ENCODE measurements at regions of chr2 and their contacts with region 1.

Region 1: DNA sequence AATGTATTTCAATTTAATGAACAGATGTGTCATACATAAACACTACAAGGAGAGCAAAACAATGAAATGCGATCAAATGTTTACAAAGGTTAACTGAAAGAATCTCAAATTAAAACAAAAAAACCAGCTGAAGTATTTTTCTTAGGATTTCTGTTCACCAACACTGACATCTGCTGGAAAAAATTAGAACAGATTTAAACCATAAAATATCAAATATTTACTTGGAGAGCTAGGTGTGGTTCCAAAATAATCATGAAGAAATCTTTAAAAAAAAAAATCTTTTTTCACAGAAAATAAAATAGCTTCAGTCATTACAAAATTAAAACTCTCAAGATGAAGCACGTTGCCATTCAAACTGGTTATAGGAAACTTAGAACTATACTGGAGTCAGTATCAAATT is 13.8 kb downstream of the MMADHC start:
- DNase-seq: no peak
- H3K4me3 Mint-ChIP-seq: no peak overlapping the region
- H3K27ac Mint-ChIP-seq: no peak overlapping the region
- H3K4me1 Mint-ChIP-seq: peaks cover 12% of the 10 kb centered on the region
- H3K27me3 Mint-ChIP-seq: no peaks in the 10 kb centered on the region

Region 2: GRCh38 chr2:149561309-149561926 is 12.3 kb before region 1 on chr2:
- CTCF ChIA-PET with region 1: interaction called, 12 read pairs
- POLR2A ChIA-PET with region 1: no interaction called
- DNase-seq: no peak
- H3K4me3 Mint-ChIP-seq: no peak overlapping the region
- H3K27ac Mint-ChIP-seq: no peak overlapping the region
- H3K4me1 Mint-ChIP-seq: peaks cover 4% of the 10 kb centered on the region
- H3K27me3 Mint-ChIP-seq: no peaks in the 10 kb centered on the region

Region 3: DNA sequence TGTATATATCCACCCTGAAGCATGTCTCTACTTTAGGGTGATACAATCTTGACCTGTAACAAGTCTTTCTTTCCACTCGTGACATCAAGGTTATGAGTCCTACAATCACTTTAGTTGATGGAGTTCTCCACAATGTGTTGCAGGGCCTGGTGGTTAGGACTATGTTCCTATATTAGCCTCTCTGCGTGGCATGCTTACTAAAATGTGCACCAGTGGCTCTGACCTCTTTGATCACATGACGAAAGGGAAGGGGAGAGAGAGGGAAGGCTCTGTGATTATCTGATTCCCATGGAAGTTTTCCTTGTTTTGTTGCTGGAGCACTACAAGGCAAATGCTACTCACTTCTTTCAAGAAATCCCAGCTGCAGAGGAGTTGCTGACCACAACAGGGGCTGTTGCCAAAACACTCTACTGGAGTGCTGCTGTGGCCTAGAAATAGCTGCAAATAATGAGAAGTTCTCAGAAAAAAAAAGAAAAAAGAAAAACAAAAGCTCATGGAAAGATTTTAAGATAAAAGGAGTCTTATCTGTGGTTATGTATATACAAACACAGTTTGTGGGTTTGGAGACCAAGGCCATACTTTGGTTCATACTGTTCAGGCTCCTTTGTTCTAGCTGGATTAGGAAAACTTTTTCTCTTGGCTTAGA is 286.6 kb after region 1 on chr2:
- CTCF ChIA-PET with region 1: no interaction called
- POLR2A ChIA-PET with region 1: no interaction called
- DNase-seq: no peak
- H3K4me3 Mint-ChIP-seq: no peak overlapping the region
- H3K27ac Mint-ChIP-seq: no peak overlapping the region
- H3K4me1 Mint-ChIP-seq: no peaks in the 10 kb centered on the region
- H3K27me3 Mint-ChIP-seq: no peaks in the 10 kb centered on the region